Heart right ventricle (tissue), 16 donors: ENCODE measurements at regions of chr14 and their contacts with region 1.

Region 1: GRCh38 chr14:61956517-61956916 is 194.3 kb downstream of the SNAPC1 start:
- DNase-seq: no peak
- ATAC-seq: no peak
- H3K4me3 ChIP-seq: no peak overlapping the region
- H3K27ac ChIP-seq: no peak overlapping the region
- H3K4me1 ChIP-seq: no peaks in the 10 kb centered on the region
- H3K27me3 ChIP-seq: no peaks in the 10 kb centered on the region
- CTCF ChIP-seq: no peak

Region 2: DNA sequence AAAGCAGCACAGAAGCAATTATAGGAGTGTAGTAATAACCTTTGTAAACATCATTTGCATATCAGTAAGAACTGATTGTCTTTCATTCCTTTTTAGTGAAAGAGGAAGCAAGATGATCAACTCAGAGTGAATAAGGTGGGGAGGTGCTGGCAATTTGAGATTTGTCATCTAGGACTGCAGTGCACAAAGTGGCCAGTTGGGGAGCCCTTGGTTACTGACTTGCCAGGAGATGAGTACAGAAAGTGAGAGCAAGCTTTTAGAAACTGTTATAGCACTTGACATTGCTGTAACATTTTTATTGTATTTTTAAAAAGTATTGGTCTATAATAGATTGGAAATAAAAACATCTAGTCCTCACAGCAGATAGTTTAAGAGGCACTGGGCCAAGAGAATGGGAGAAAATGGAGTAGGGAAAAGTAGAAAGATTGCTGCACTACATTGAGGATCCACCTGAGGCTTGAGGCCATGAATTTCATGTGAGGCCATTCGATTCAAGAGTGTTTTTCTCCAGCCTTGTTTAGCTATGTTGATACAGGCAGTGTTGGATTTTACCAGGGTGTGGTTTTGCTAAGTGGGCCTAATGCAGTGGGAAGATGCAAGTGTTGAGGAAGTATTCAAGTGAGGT is 96.1 kb before region 1 on chr14:
- intact Hi-C with region 1: no loop called
- DNase-seq: peak in 1 of 2 donors; percentile 18
- ATAC-seq: peak in 1 of 8 donors; percentile 45
- H3K4me3 ChIP-seq: no peak overlapping the region
- H3K27ac ChIP-seq: no peak overlapping the region
- H3K4me1 ChIP-seq: no peaks in the 10 kb centered on the region
- H3K27me3 ChIP-seq: peaks cover 0 to 13% (median 0%) of the 10 kb centered on the region in 7 donors
- CTCF ChIP-seq: peak; percentile 32 to 87 (median 64)

Region 3: DNA sequence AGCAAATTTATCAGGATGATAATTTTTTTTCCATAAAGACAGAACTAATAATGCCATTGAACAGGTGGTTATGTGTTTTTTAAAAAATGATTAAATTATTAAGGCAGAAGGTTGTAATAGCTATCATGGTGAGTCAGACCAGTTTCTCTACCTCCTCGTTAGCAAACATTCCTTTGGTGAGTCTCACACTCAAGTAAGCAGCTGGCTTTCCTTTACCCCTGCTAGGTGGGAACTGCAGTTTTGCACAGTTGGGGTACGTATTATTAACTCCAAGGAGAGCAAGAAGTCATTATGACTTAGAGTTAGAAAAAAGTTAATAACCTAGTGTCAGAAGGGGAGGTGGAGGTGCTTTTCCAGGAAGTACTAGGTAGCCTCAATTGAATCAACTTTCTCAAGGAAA is 29.0 kb before region 1 on chr14:
- intact Hi-C with region 1: loop called in 1 of 10 experiments (anchors 1 kb)
- DNase-seq: no peak
- ATAC-seq: no peak
- H3K4me3 ChIP-seq: no peak overlapping the region
- H3K27ac ChIP-seq: no peak overlapping the region
- H3K4me1 ChIP-seq: no peaks in the 10 kb centered on the region
- H3K27me3 ChIP-seq: peaks cover 0 to 36% (median 5%) of the 10 kb centered on the region in 7 donors
- CTCF ChIP-seq: no peak

Region 4: GRCh38 chr14:61992139-61992538 is 35.6 kb after region 1 on chr14:
- intact Hi-C with region 1: no loop called
- DNase-seq: no peak
- ATAC-seq: no peak
- H3K4me3 ChIP-seq: no peak overlapping the region
- H3K27ac ChIP-seq: no peak overlapping the region
- H3K4me1 ChIP-seq: no peaks in the 10 kb centered on the region
- H3K27me3 ChIP-seq: no peaks in the 10 kb centered on the region
- CTCF ChIP-seq: no peak

Region 5: DNA sequence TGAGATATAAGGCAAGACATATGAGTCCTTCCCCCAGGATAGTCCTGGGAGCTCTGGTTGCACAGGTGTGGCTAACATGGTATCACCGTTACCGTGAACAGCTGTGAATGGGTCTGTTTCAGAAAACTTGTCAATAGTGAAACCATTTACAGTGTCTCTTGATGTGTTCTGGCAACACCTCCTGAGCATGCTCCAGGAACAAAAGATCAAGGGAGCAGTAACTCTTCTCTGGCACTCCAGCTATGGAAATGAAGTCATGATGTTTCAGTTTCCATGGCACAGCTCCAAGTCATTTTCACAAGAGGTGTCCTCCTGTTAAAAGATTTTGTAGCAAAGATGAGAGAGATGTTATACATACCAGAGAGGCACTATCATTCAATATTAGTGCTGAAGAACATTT is 59.4 kb after region 1 on chr14:
- intact Hi-C with region 1: no loop called
- DNase-seq: no peak
- ATAC-seq: no peak
- H3K4me3 ChIP-seq: no peak overlapping the region
- H3K27ac ChIP-seq: no peak overlapping the region
- H3K4me1 ChIP-seq: no peaks in the 10 kb centered on the region
- H3K27me3 ChIP-seq: no peaks in the 10 kb centered on the region
- CTCF ChIP-seq: no peak